ENCODE measurements at regions of chr21 and their contacts with region 1.

Region 1: GRCh38 chr21:31659536-31660258 is at the start of gene SOD1:
- DNase-seq: peak; percentile 83 to 87 (median 85)
- H3K4me3 ChIP-seq: peak within 1 kb of the TSS; percentile 46 to 84 (median 79)
- H3K4me3 Mint-ChIP-seq: peak within 1 kb of the TSS; percentile 97 to 99
- H3K27ac ChIP-seq: peak within 1 kb of the TSS; percentile 53 to 84
- H3K27ac Mint-ChIP-seq: peak within 1 kb of the TSS; percentile 82 to 97 (median 93)
- H3K4me1 ChIP-seq: peaks cover 11 to 19% of the 10 kb centered on the region in 2 donors
- H3K4me1 Mint-ChIP-seq: peaks cover 41% of the 10 kb centered on the region
- H3K27me3 ChIP-seq: no peaks in the 10 kb centered on the region
- H3K27me3 Mint-ChIP-seq: peaks cover 7 to 8% (median 8%) of the 10 kb centered on the region in 3 donors
- CTCF ChIP-seq: no peak
- polyA plus RNA-seq, gene SOD1: 79.6 to 174 (median 157) TPM

Region 2: DNA sequence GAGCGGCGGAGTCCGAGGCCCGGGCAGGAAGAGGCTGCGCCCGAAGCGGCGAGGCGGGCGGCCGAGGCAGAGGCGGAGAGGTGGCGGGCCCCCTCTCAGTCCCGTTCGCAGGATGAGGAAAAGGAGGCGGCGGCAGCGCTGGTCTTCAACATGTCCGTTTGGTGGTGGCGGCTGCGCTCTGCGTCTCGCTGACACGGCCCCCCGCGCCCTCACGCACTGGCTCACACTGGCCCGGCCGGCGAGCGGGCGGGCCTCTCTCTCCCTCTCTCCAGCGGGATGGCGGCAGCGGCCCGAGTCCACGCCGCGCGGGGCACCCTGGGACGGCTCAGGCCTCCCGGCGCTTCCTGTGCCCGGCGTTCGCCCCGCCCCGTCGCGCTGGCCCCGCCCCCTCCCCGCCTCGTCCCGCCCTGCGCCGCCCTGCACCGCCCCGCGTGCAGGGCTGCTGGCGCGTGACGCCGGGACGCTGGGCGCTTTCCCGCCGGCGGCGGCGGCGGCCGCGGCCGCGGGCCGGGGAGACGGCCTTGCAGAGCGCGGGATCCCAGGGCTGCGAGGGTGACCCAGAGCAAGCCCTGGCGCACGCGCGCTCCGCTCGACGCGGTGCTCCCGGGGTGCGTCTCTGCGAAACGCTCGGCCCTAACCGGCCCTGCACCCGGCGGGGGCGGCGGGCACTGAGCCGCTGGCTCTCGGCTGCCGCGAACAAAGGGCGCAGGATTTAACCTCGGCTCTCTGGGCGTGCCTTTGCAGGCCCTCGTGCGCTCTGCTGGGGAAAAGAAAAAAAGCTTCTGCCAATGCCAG is 72.3 kb after region 1 on chr21 and contains the start of gene SCAF4:
- intact Hi-C with region 1: loop called (anchors 5 kb)
- DNase-seq: peak; percentile 82 to 86 (median 84)
- H3K4me3 ChIP-seq: peak within 1 kb of the TSS; percentile 62 to 93 (median 91)
- H3K4me3 Mint-ChIP-seq: peak within 1 kb of the TSS; percentile 85 to 90
- H3K27ac ChIP-seq: peak within 1 kb of the TSS; percentile 80 to 89
- H3K27ac Mint-ChIP-seq: peak within 1 kb of the TSS; percentile 80 to 92 (median 91)
- H3K4me1 ChIP-seq: peaks cover 38 to 41% of the 10 kb centered on the region in 2 donors
- H3K4me1 Mint-ChIP-seq: peaks cover 10% of the 10 kb centered on the region
- H3K27me3 ChIP-seq: no peaks in the 10 kb centered on the region
- H3K27me3 Mint-ChIP-seq: peaks cover 0 to 3% (median 0%) of the 10 kb centered on the region in 3 donors
- CTCF ChIP-seq: no peak
- polyA plus RNA-seq, gene SCAF4: 4.6 to 28.7 (median 11.3) TPM